ENCODE measurements at regions of chr3 and their contacts with region 1.

Region 1: GRCh38 chr3:62940771-62941563 is 65.8 kb upstream of the CADPS start:
- DNase-seq: peak; percentile 43
- H3K4me3 Mint-ChIP-seq: peak overlapping the region; percentile 30
- H3K27ac Mint-ChIP-seq: peak overlapping the region; percentile 81
- H3K4me1 Mint-ChIP-seq: peaks cover 19% of the 10 kb centered on the region
- H3K27me3 Mint-ChIP-seq: peaks cover 29% of the 10 kb centered on the region
- CTCF ChIP-seq: no peak

Region 2: GRCh38 chr3:62686506-62687286 is 254.3 kb before region 1 on chr3:
- CTCF ChIA-PET with region 1: no interaction called
- POLR2A ChIA-PET with region 1: no interaction called
- intact Hi-C with region 1: loop called (anchors 10 kb)
- DNase-seq: peak; percentile 85
- H3K4me3 Mint-ChIP-seq: no peak overlapping the region
- H3K27ac Mint-ChIP-seq: no peak overlapping the region
- H3K4me1 Mint-ChIP-seq: peaks cover 46% of the 10 kb centered on the region
- H3K27me3 Mint-ChIP-seq: no peaks in the 10 kb centered on the region
- CTCF ChIP-seq: no peak